ENCODE measurements at regions of chr6 and their contacts with region 1.

Region 1: GRCh38 chr6:34633256-34633655 is 63.3 kb downstream of the ILRUN start:
- DNase-seq: no peak
- H3K4me3 ChIP-seq: no peak overlapping the region
- H3K27ac ChIP-seq: no peak overlapping the region
- H3K4me1 ChIP-seq: no peaks in the 10 kb centered on the region
- H3K27me3 ChIP-seq: no peaks in the 10 kb centered on the region
- CTCF ChIP-seq: no peak
- POLR2A ChIP-seq: no peak

Region 2: DNA sequence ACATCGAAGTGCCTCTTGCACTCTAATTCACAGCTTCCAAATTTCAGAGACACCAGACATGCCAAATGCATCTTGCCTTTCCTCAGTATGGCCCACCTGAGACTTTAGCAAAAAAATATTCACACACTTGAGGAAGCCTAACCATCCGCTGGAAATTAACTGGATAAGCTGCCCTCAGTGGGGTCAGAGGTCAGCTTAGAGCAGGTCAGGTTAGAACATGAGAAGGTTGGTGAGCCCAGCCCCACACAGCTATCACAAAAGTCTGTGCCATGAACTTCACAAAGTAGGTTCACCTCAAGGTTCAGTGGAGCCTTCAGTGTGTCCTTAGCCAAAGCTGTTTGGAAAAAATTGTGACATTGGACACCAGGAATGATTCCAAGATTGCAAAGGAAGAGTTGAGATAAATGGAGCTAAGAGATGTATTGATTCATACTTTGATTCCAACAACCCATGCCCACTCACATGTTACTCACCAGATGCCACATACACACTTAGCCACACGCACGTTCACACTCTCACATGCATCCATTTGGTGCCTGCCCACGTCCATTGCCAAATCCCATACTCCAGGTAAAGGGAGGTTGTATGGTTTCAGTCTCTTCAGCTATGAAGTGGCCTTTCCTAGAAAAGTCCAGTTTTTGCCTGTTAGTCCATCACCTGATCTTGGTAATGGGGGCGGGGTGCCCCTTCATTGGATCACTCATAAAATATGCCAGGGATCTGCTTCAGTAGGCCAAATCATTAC is 1064.3 kb before region 1 on chr6:
- CTCF ChIA-PET with region 1: no interaction called
- POLR2A ChIA-PET with region 1: interaction called, 10 read pairs
- dilution Hi-C with region 1: no loop called
- intact Hi-C with region 1: no loop called
- DNase-seq: no peak
- H3K4me3 ChIP-seq: no peak overlapping the region
- H3K27ac ChIP-seq: no peak overlapping the region
- H3K4me1 ChIP-seq: peaks cover 8% of the 10 kb centered on the region
- H3K27me3 ChIP-seq: no peaks in the 10 kb centered on the region
- CTCF ChIP-seq: no peak
- POLR2A ChIP-seq: no peak

Region 3: GRCh38 chr6:34771727-34772126 is 138.5 kb after region 1 on chr6:
- CTCF ChIA-PET with region 1: no interaction called
- POLR2A ChIA-PET with region 1: no interaction called
- dilution Hi-C with region 1: no loop called
- intact Hi-C with region 1: no loop called
- DNase-seq: no peak
- H3K4me3 ChIP-seq: no peak overlapping the region
- H3K27ac ChIP-seq: no peak overlapping the region
- H3K4me1 ChIP-seq: no peaks in the 10 kb centered on the region
- H3K27me3 ChIP-seq: no peaks in the 10 kb centered on the region
- CTCF ChIP-seq: no peak
- POLR2A ChIP-seq: no peak

Measured in endothelial cell of umbilical vein (primary cell).